Caki2 (cell line): ENCODE measurements at regions of chr12 and their contacts with region 1.

Region 1: DNA sequence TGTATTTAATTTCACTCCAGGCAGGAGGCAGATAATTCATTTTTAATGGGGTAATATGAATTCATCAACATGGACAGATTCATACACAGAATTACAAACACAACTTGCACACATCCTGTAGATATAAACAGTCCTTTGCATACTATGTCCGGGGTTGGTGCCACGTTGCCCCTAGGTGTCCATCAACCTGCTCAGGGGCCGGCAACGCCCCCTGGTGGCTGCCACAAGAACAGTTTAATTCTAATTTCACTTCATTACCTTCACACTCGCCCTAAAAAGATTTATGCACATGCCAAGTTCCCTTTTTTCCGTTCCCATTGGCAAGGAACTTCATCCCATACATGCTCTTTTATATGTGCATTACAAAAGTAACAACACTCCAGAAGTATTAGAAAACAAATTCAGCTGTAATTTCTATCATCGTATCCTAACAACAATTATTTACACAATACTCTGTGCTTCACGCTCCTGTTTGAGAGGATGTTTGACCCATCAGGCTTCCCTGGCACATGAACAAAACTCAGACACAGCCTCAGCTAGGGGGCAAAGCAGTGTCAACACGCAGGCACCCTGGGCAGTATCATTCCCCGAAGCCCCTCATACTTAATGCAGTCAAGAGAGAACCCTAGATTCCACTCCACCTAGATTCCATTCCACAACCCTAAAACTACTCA is 15.5 kb downstream of the MANSC1 start:
- DNase-seq: peak; percentile 47

Region 2: DNA sequence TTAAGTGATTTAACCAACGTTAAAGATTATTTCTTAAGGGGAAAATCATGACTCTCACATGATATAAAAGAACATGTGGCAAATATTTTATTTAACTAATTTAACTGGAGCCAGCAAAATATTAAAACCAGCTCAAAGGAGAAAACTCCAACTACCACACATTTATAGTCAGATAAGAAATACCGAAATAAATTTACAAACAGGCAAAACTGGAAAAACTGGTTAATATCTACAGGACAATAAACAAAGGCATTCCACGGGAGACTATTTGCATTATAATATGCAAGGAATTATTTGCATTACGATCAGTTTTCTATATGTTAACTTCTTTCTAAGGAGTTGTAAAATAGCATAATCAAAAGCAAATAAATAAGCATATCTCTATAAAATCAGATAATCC is 277.6 kb before region 1 on chr12:
- in situ Hi-C with region 1: no loop called
- DNase-seq: no peak

Region 3: GRCh38 chr12:12081836-12082497 is 252.5 kb before region 1 on chr12:
- in situ Hi-C with region 1: loop called (anchors 25 kb)
- DNase-seq: peak; percentile 70